BJ (cell line): ENCODE measurements at regions of chr7 and their contacts with region 1.

Region 1: DNA sequence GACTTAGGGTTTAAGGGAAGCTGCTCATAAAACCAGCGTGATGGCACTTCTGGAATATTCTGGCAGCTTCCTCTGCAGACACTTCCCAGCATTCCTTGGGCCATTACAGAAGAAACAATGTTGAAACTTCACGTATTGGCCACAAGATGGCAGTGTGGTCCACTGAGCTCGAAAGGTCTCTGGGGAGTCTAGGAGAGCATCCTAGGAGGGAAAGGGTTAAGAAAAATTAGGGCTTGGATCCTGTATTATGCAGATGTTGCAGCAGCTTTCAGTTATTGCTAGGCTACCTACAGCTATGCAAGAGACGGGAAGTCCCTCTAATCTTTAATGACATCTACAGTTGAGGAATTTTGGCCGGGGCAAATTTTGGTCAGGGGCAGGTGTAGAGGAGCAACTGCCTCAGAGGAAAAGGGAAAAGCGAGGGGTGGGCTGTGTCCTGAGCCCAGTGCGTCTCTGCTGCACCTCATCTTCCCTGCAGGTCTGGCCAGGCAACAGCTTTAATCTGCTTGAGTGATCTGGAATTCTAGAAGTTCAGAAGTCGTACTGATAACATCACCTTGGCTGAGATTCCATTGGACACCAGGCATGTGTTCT is 220.7 kb upstream of the PRSS58 start:
- DNase-seq: no peak
- H3K4me3 ChIP-seq: no peak overlapping the region
- H3K27me3 ChIP-seq: no peaks in the 10 kb centered on the region
- CTCF ChIP-seq: peak; percentile 74

Region 2: DNA sequence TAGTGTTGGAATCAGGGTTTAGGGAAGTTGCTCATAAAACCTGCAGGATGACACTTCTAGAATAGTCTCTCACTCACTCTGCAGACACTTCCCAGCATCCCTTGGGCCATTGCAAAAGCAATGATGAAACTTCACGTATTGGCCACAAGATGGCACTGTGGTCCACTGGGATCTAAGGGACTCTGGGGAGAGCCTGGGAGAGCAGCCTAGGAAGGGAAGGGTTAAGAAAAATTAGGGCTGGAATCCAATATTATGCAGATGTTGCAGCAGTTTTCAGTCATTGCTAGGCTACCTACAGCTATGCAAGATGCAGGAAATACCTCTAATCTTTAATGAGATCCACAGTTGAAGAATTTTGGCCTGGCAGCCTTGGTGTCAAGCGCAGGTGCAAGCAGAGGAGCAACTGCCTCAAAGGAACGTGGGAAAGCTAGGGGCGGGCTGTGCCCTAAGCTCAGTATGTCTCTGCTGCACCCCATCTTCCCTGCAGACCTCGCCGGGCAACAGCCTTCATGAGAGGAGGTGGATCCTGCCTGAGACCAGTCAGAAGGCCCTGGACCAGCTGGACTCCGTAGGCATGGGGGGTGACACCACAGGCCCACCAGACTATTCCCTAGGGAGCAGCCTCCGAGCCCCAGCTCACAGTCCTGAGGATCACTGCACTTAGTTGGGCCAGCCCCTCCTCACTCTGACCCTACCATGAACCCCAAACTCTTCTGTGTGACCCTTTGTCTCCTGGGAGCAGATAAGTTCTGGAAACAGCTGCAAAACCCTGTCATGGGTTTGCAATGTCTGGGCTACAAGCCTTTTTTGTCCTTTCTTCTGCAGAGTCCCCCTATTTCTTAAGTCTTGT is 92.9 kb before region 1 on chr7:
- CTCF ChIA-PET with region 1: interaction called, 67 read pairs
- POLR2A ChIA-PET with region 1: no interaction called
- DNase-seq: no peak
- H3K4me3 ChIP-seq: no peak overlapping the region
- H3K27me3 ChIP-seq: peaks cover 2% of the 10 kb centered on the region
- CTCF ChIP-seq: peak; percentile 82

Region 3: DNA sequence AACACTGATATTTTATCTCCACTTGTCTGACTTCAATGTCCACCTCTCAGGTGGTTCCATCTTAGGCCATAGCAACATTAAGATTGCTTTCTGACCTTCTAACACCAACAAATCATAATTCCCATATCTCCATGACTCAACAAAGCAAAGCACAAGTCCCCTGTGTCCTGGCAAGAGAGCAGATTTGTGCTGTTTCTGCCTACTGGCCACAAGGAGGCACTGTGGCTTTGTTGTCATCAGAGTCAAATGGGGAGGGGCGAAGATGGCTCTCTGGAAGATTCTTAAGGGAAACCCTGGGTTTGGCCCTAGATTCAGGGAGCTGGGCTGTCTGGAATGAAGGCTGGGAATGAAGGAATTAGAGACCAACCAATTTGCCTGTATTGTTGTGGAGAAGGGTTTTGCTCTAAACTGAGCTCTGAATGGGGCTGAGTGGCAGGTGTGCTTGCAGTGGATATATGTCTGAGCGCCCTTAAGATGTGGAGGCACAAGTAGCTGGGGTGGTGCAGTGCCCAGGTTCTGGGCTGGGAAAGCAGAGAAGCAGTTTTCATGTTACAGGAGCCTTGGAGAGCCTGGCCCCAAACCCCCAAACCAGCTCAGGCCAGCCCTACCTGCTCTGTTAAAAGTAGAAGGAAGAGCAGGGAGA is 65.9 kb before region 1 on chr7:
- CTCF ChIA-PET with region 1: interaction called, 237 read pairs
- POLR2A ChIA-PET with region 1: no interaction called
- DNase-seq: no peak
- H3K4me3 ChIP-seq: no peak overlapping the region
- H3K27me3 ChIP-seq: no peaks in the 10 kb centered on the region
- CTCF ChIP-seq: peak; percentile 75

Region 4: DNA sequence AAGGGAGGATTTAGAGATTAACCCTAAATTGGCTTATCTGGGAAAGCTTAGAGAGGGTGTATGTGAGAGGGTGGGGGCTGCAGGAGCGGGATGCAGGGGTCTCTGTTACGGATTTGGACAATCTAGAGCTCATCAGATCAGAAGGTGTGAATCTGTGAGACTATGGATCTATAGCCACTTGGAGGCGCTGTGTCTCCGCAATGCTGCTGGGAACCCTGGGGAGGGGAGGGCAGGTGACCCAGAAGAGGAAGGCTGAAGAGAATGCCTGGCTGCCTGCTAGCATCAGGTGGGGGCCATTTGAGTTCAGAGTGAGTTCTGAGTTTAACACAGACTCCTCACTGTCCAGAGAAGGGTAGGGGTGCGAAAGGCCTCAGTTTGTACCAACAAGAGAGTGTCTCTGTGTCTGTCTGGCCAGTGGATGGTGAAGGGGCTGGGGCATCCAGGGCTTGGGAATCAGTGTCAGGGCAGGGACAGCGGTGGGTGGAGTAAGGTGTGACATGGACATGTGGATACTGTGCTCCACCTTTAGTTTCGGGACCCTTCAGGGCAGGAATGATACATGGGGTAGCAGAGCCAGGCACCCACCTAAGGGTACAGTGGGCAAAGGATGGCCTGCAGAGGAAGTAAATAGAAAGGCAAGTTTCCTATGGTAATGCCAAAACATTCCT is 33.4 kb before region 1 on chr7:
- CTCF ChIA-PET with region 1: interaction called, 641 read pairs
- POLR2A ChIA-PET with region 1: no interaction called
- DNase-seq: no peak
- H3K4me3 ChIP-seq: no peak overlapping the region
- H3K27me3 ChIP-seq: no peaks in the 10 kb centered on the region
- CTCF ChIP-seq: peak; percentile 34; the same call in 1 of the 2 replicates